K562 (cell line): ENCODE measurements at regions of chr6 and their contacts with region 1.

Region 1: DNA sequence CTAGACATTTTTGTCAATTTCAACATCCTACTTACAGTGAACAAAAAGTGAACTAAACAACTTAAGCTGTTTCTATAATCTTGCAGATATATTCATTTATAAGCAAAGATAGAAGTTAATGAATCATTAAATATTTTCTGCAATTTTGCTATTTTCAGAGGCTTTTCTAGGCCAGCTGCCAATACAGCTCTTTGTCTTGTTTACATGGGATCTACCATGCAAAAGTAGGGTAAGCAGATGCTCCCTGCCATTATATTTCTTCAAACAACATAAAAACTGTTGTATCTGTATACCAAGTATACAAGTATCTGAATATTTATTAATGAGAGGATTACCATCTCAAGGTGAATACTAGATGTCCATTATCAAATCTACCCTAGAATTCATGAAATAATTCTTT is 15.4 kb downstream of the PNISR start:
- DNase-seq: no peak
- ATAC-seq: no peak
- H3K4me3 ChIP-seq: no peak overlapping the region
- H3K27ac ChIP-seq: no peak overlapping the region
- H3K4me1 ChIP-seq: no peaks in the 10 kb centered on the region
- H3K27me3 ChIP-seq: no peaks in the 10 kb centered on the region
- CTCF ChIP-seq: no peak
- EP300 ChIP-seq: no peak
- POLR2A ChIP-seq: no peak
- RAD21 ChIP-seq: no peak

Region 2: GRCh38 chr6:99393698-99394531 is 15.8 kb before region 1 on chr6 and contains the start of gene COQ3:
- CTCF ChIA-PET with region 1: no interaction called
- POLR2A ChIA-PET with region 1: interaction called, 14 read pairs
- in situ Hi-C with region 1: no loop called
- intact Hi-C with region 1: no loop called
- DNase-seq: peak; percentile 84 to 92 (median 90)
- ATAC-seq: peak; percentile 91
- H3K4me3 ChIP-seq: peak within 1 kb of the TSS; percentile 75
- H3K27ac ChIP-seq: peak within 1 kb of the TSS; percentile 94
- H3K4me1 ChIP-seq: peaks cover 3 to 4% of the 10 kb centered on the region in 2 experiments; a peak in 3 of 5 replicates
- H3K27me3 ChIP-seq: no peaks in the 10 kb centered on the region
- CTCF ChIP-seq: no peak
- EP300 ChIP-seq: peak; percentile 28; the same call in 1 of the 2 replicates
- POLR2A ChIP-seq: peak; percentile 89
- RAD21 ChIP-seq: no peak
- polyA plus RNA-seq, gene COQ3: 111 to 137 TPM

Region 3: GRCh38 chr6:99446076-99446475 is 36.4 kb after region 1 on chr6:
- CTCF ChIA-PET with region 1: no interaction called
- POLR2A ChIA-PET with region 1: no interaction called
- in situ Hi-C with region 1: no loop called
- intact Hi-C with region 1: no loop called
- DNase-seq: no peak
- ATAC-seq: no peak
- H3K4me3 ChIP-seq: no peak overlapping the region
- H3K27ac ChIP-seq: no peak overlapping the region
- H3K4me1 ChIP-seq: no peaks in the 10 kb centered on the region
- H3K27me3 ChIP-seq: no peaks in the 10 kb centered on the region
- CTCF ChIP-seq: no peak
- EP300 ChIP-seq: no peak
- POLR2A ChIP-seq: no peak
- RAD21 ChIP-seq: no peak